Tibial artery (tissue), 4 donors: ENCODE measurements at regions of chr16 and their contacts with region 1.

Region 1: DNA sequence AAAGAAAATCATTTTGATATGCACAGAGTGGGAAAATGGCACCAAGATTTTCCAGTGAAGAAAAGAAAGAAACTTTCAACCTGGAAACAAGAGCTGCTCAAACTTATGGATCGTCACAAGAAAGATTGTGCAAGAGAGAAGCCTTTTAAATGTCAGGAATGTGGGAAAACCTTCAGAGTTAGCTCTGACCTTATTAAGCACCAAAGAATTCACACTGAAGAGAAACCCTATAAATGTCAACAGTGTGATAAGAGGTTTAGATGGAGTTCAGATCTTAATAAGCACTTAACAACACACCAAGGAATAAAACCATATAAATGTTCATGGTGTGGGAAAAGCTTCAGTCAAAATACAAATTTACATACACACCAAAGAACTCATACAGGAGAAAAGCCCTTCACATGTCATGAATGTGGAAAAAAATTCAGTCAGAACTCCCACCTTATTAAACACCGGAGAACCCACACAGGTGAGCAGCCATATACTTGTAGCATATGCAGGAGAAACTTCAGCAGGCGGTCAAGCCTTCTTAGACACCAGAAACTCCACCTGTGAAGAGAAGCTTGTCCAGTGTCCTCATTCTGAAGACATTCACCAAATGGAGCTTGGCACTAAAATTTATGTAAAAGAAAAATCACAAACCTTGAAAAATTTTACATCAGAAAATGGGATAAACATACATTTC is 12.2 kb downstream of the ZNF75A start:
- DNase-seq: no peak
- H3K4me3 ChIP-seq: no peak overlapping the region
- H3K27ac ChIP-seq: no peak overlapping the region
- H3K4me1 ChIP-seq: no peaks in the 10 kb centered on the region
- H3K27me3 ChIP-seq: no peaks in the 10 kb centered on the region
- CTCF ChIP-seq: no peak

Region 2: DNA sequence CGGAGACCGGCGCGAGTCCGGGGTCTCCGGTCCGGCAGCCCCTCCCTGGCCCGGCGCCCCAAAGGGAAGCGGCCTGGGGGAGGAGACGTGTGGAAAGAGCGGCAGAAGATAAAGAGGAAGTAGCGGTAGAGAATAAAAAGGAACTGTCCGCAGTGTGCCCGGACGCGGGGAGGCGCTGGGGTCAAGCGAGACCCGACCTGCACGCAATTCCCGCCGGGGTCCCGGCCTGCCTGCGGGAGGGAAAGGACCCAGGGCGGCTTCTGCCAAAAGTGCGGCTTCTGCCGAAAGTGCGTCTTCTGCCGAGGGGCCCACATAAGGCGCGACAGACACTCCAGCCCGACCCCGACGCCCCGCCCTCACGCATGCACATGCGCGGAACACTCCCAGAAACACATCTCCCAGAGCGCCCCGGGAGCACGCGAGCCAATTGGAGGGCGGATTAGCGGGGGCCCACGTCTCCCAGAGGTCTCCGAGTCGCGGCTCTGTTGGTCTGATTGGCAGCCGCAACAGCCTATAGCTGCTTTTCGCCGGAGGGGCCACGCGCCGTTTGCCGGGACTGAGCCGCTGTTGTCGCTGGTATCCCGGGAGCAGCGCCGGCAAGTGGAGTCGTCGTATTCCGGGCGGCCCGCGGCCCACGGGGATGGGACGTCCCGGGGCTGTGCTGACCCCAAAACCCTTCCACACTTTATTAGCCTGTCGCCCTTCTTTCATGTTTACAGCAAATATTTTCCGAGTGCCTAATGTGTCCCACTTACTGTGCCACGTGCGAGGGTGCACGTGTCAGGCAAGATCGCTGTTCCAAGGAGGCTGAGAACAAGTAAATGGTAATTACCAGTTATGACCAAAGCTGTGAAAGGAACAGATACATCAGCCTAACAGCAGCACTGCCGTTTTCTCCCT is 53.1 kb before region 1 on chr16:
- intact Hi-C with region 1: no loop called
- DNase-seq: peak; percentile 92 to 97
- H3K4me3 ChIP-seq: peak overlapping the region; percentile 82 to 92
- H3K27ac ChIP-seq: peak overlapping the region; percentile 94 to 98
- H3K4me1 ChIP-seq: peaks cover 0 to 21% (median 0%) of the 10 kb centered on the region in 4 donors
- H3K27me3 ChIP-seq: no peaks in the 10 kb centered on the region
- CTCF ChIP-seq: peak in 1 of 2 experiments; percentile 10

Region 3: DNA sequence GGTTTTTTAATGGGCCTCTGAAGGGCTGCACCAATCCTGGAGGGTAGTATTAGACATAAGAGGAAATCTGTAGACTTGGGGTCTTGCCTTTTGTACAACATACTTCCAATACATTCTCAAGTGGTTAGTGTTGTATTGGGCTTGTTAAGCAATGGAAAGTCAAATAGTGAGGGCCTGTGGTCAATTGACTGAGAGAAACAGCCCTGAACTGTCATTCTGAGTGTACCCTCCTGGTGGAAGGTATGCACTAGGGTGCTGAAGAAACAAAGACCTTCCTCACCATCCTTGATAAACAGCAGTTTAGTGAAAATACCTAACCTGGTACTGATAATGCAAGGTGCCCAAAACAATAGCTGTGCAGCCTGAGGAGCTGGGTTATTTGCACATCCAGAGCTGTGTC is 60.5 kb after region 1 on chr16:
- intact Hi-C with region 1: loop called (anchors 10 kb)
- DNase-seq: no peak
- H3K4me3 ChIP-seq: no peak overlapping the region
- H3K27ac ChIP-seq: no peak overlapping the region
- H3K4me1 ChIP-seq: no peaks in the 10 kb centered on the region
- H3K27me3 ChIP-seq: no peaks in the 10 kb centered on the region
- CTCF ChIP-seq: no peak